ENCODE measurements at regions of chr1 and their contacts with region 1.

Region 1: DNA sequence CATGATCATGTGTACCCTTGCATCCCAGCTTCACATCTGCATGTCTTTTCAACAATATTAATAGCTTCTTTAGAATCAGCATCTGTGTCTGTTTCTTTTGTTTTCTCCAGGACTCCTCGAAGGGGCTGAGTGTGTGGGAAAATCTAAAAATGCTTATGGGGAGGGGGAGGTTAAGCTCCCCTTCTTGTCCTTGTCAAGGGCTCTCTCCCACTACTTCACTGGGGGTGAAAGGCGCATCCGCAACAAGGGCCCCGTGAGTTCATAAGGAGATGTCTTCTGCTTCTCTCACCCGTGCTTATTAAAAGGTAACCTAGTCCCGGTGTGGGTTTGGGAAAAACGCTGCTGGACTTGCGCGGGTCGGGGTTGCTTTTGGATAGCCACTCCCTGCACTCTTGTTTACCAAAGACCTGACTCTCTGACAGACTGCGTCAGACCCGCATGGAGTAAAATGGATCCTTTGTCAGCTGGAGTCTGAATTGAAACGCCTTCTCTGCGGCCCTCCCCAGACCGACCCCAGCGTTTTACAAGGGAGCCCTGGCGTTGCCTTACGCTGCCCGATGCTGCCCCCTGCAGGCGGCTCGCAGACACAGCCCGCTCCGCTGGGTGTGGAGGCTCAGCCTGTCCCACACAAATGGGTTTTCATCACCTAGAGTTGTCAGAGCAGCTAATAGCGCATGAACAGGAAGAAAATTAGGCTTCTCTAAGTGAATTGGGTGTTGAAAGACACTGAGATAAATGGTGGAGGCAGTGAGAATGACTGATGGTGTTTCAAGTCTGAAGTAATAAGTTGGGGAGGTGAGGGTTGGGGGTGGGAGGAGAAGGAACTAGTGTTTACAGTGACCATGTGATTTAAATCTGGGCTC is 53.8 kb downstream of the IER5 start:
- DNase-seq: peak; percentile 88
- H3K4me3 ChIP-seq: peak overlapping the region in 1 of 2 experiments; percentile 28; a peak in 1 of 4 replicates
- H3K27ac ChIP-seq: peak overlapping the region in 1 of 2 experiments; percentile 61; a peak in 2 of 4 replicates
- H3K4me1 ChIP-seq: peaks cover 4 to 29% of the 10 kb centered on the region in 2 experiments; a peak in 3 of 4 replicates
- H3K27me3 ChIP-seq: no peaks in the 10 kb centered on the region
- CTCF ChIP-seq: peak; percentile 99
- EP300 ChIP-seq: no peak
- RAD21 ChIP-seq: peak; percentile 98

Region 2: GRCh38 chr1:180533266-180533987 is 608.9 kb before region 1 on chr1:
- CTCF ChIA-PET with region 1: interaction called, 10 read pairs
- POLR2A ChIA-PET with region 1: no interaction called
- DNase-seq: peak; percentile 72
- H3K4me3 ChIP-seq: no peak overlapping the region; a peak in 1 of 4 replicates
- H3K27ac ChIP-seq: peak overlapping the region in 1 of 2 experiments; percentile 0; a peak in 1 of 4 replicates
- H3K4me1 ChIP-seq: peaks cover 0 to 11% of the 10 kb centered on the region in 2 experiments; a peak in 2 of 4 replicates
- H3K27me3 ChIP-seq: no peaks in the 10 kb centered on the region
- CTCF ChIP-seq: peak; percentile 95
- EP300 ChIP-seq: no peak
- RAD21 ChIP-seq: peak; percentile 97

Region 3: GRCh38 chr1:180926164-180926981 is 216.0 kb before region 1 on chr1:
- CTCF ChIA-PET with region 1: interaction called, 27 read pairs
- POLR2A ChIA-PET with region 1: no interaction called
- DNase-seq: peak; percentile 90
- H3K4me3 ChIP-seq: no peak overlapping the region
- H3K27ac ChIP-seq: peak overlapping the region; percentile 30 to 99; a peak in 3 of 4 replicates
- H3K4me1 ChIP-seq: peaks cover 13 to 81% of the 10 kb centered on the region in 2 experiments; a peak in 3 of 4 replicates
- H3K27me3 ChIP-seq: no peaks in the 10 kb centered on the region
- CTCF ChIP-seq: no peak
- EP300 ChIP-seq: peak; percentile 17 to 92; a peak in 3 of 4 replicates
- RAD21 ChIP-seq: no peak; the same call in 1 of the 2 replicates

Region 4: DNA sequence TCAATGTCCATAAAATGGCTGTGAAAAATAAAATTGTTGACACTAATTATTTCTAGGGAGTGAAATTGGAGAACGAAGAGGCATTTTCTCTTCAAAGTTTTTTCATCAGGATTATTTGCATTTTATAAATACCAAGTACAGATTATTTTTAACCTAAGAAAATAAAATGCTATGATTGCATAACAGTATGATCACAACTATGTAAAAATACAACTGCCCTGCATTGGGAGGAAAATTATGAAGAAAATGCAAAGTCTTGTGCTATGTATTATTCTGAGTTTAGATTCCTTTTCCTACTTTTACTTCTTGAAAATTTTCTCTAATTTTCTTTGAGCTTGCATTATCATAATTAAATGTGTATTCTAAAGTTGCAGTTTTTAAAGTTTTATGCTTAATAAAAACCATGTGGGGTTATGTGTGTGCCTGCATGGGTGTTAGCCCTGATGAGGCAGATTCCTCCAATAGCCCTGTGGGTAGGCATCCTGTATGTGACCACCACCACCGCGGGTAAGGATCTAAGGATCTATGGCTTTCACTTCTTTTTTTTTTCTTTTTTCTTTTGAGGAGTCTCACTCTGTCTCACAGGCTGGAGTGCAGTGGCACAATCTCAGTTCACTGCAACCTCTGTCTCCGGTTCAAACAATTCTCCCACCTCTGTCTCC is 144.4 kb before region 1 on chr1:
- CTCF ChIA-PET with region 1: interaction called, 23 read pairs
- POLR2A ChIA-PET with region 1: no interaction called
- DNase-seq: no peak
- H3K4me3 ChIP-seq: no peak overlapping the region
- H3K27ac ChIP-seq: no peak overlapping the region
- H3K4me1 ChIP-seq: no peaks in the 10 kb centered on the region; a peak in 1 of 4 replicates
- H3K27me3 ChIP-seq: no peaks in the 10 kb centered on the region
- CTCF ChIP-seq: no peak
- EP300 ChIP-seq: no peak
- RAD21 ChIP-seq: no peak

Region 5: DNA sequence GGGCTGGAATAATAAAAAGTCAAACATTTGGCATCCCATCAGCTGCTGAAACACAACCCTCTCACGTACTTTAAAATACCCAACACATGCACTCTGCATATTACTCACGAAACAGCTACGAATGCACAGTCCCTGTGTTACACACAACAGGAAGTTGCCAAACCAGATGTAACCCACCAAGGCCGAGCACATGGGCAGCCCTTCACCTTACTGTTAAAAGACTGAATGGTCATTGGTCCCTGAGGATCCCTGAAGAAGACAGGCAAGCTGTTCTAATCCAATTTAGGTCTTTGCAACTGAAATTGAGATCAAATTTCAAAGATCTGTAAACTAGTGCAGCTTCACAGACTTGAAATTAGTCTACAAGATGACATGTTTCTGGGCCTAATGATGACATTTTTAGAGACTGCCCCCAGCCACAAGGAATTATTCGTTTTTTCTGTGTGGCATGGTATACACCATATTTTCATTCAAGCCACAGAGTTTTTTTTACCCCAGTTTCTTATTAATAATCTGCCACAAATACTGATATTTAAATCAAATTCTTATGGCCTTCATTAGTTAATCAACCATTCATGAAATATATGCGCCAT is 79.4 kb before region 1 on chr1:
- CTCF ChIA-PET with region 1: interaction called, 13 read pairs
- POLR2A ChIA-PET with region 1: no interaction called
- DNase-seq: no peak
- H3K4me3 ChIP-seq: no peak overlapping the region
- H3K27ac ChIP-seq: no peak overlapping the region
- H3K4me1 ChIP-seq: peaks cover 0 to 6% of the 10 kb centered on the region in 2 experiments; a peak in 2 of 4 replicates
- H3K27me3 ChIP-seq: no peaks in the 10 kb centered on the region
- CTCF ChIP-seq: no peak
- EP300 ChIP-seq: no peak
- RAD21 ChIP-seq: no peak

Region 6: DNA sequence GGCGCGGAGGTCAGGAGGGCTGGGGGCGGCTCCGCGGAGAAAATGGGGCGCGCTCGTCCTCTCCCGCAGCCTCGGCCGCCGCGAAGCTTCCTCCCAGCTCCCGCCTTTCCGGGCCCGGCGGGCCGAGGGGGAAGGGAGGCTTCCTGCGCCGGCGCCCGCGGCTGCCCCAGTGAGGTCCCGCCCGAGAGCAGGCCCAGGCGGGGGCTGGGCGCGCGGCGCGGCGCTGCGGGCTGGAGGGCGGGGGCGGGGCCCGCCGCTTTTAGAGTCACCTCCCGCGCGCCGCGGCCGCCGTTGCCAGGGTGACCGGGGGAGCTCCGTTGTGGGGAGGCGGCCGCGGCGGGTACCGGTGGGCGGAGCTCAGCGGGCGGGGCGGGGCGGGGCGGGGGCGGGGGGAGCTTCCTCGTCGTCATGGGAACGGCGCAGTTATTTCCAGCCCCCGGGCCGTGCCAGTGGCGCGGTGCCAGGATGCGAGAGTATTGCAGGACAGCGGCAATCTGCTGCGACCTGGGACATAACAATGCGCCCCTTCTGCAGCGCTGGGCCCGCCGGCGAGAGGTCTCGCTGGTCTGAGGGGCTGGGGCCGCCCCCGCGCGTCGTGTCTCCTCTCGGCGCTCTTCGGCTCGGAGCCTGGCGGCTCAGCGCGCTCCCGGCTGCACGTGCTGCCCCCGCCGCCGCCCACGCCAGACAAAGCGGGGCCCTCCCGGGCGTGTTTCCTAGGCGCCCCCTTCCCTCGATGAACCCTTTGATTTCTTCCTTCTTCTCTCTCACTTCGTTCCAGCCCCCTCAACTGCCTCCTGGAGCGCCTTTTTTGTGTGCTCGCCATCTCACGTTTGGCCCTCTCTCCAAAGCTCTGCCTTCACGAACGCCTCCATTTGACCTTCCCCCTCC is 36.9 kb before region 1 on chr1:
- CTCF ChIA-PET with region 1: interaction called, 145 read pairs
- POLR2A ChIA-PET with region 1: interaction called, 6 read pairs
- DNase-seq: peak; percentile 98
- H3K4me3 ChIP-seq: peak overlapping the region; percentile 80 to 94
- H3K27ac ChIP-seq: peak overlapping the region; percentile 98 to 99
- H3K4me1 ChIP-seq: peaks cover 45 to 52% of the 10 kb centered on the region in 2 experiments; a peak in 3 of 4 replicates
- H3K27me3 ChIP-seq: no peaks in the 10 kb centered on the region
- CTCF ChIP-seq: no peak
- EP300 ChIP-seq: 0 out of 4 replicates have a peak, but pooled peaks of 1 of the 2 experiments have one; percentile 6
- RAD21 ChIP-seq: no peak

Region 7: GRCh38 chr1:181159451-181160140 is 17.3 kb after region 1 on chr1:
- CTCF ChIA-PET with region 1: interaction called, 72 read pairs
- POLR2A ChIA-PET with region 1: no interaction called
- DNase-seq: no peak
- H3K4me3 ChIP-seq: no peak overlapping the region
- H3K27ac ChIP-seq: no peak overlapping the region
- H3K4me1 ChIP-seq: peaks cover 0 to 9% of the 10 kb centered on the region in 2 experiments; a peak in 1 of 4 replicates
- H3K27me3 ChIP-seq: no peaks in the 10 kb centered on the region
- CTCF ChIP-seq: no peak
- EP300 ChIP-seq: no peak
- RAD21 ChIP-seq: no peak

Region 8: DNA sequence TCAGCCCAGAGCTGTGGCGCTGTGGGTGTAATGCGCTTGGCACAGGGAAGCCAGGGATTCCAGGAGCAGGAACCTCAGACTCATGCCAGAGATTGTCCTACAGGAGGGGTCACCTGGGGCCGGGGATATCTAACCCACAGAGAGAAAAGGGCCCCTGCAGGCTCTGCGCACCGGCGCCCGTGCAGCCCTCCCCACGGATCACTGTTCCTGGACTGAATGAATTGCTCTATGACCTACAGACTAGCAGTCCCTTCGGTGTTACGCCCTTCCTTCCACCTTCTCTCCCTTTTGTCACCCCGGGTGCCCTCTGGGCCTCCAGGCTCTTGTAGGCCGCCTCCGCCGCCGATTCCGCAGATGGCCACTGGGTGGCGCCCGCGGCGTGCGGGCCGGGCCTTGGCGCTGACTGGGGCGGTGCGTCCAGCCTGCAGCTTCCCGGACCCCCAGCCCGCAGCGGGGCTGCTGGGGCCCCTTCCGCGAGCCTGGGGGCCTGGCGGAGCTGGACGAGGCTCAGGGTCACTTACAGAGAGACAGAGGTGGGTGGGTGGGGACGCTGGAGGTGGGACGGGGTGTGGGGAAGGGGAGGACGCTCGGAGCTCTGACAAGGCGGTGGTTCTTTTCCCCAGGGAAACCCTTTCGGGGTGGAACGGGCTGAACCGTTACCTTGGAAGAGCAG is 47.5 kb after region 1 on chr1:
- CTCF ChIA-PET with region 1: no interaction called
- POLR2A ChIA-PET with region 1: no interaction called
- DNase-seq: peak; percentile 92
- H3K4me3 ChIP-seq: peak overlapping the region; percentile 32 to 62
- H3K27ac ChIP-seq: no peak overlapping the region
- H3K4me1 ChIP-seq: no peaks in the 10 kb centered on the region; a peak in 1 of 4 replicates
- H3K27me3 ChIP-seq: peaks cover 6% of the 10 kb centered on the region; the same call in 1 of the 2 replicates
- CTCF ChIP-seq: peak; percentile 96
- EP300 ChIP-seq: no peak
- RAD21 ChIP-seq: peak; percentile 86

Region 9: DNA sequence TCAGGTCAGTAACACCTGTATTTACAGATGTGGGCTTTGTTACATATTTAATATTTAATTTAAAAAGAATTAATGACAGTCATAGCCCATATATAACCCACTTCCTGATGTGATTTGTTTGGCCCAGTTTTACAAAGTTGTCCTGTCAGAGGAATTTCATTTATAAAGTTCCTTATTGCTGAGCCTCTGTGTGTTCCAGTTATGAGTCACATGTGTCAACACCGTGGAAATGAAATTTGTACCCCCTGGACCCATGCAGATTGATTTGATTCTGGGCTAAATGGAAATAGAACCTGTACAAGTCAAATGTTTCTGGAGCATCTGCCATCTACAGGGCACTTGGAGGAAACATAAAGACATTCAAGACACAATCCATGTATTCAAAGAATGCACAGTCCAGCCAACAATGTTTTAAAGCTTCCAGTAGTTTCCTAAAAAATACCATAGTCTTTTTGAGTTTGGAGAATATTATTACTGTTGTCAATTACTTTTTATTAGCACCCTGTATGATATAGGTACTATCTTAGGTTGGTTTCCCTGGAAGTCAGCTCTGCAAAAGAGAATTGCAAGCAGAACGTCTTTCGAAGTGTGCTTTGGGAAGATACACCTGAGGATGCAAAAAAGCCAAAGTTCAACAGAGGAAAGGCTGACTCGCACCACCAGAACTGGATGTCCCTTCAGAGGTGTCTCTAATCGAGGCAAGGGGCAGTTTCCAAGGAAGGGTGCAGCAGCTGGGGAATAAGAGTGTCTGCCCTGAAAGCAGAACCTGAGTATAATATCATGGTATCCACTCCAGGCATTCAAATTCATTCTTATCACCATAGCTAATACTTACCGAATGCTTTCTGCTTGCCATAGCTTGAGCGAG is 490.4 kb after region 1 on chr1:
- CTCF ChIA-PET with region 1: no interaction called
- POLR2A ChIA-PET with region 1: no interaction called
- DNase-seq: no peak
- H3K4me3 ChIP-seq: no peak overlapping the region
- H3K27ac ChIP-seq: no peak overlapping the region
- H3K4me1 ChIP-seq: no peaks in the 10 kb centered on the region
- H3K27me3 ChIP-seq: no peaks in the 10 kb centered on the region
- CTCF ChIP-seq: no peak
- EP300 ChIP-seq: no peak
- RAD21 ChIP-seq: no peak